MCF 10A (cell line): ENCODE measurements at regions of chr7 and their contacts with region 1.

Region 1: GRCh38 chr7:157336383-157337315 is at the start of gene DNAJB6:
- DNase-seq: peak; percentile 90
- H3K4me3 Mint-ChIP-seq: peak within 1 kb of the TSS; percentile 79
- H3K27ac Mint-ChIP-seq: peak within 1 kb of the TSS; percentile 97
- H3K4me1 Mint-ChIP-seq: peaks cover 13% of the 10 kb centered on the region
- H3K27me3 Mint-ChIP-seq: no peaks in the 10 kb centered on the region
- CTCF ChIP-seq: no peak
- total RNA-seq, gene DNAJB6: 110 and 124 TPM in 2 replicates

Region 2: DNA sequence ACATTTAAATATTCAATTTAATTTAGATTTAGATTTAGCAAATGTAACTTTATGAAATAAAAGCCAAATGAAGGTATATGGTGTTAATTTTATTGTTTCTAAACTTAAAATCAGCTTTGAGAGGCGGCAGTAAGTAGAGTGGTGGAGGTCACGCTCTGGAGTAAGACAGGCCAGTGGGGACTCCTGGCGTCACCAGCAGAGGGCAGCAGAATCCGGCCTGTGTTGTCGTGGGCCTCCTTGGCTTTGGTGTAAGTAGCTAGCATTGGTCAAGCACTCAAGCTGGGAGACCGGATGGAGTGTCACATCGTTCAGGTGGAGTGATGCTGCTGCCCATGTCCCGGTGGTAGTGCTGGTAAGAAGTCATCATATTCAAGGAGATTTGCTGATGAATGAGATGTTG is 98.6 kb before region 1 on chr7:
- CTCF ChIA-PET with region 1: interaction called, 9 read pairs
- POLR2A ChIA-PET with region 1: no interaction called
- intact Hi-C with region 1: loop called (anchors 2 kb)
- DNase-seq: peak; percentile 50
- H3K4me3 Mint-ChIP-seq: no peak overlapping the region
- H3K27ac Mint-ChIP-seq: no peak overlapping the region
- H3K4me1 Mint-ChIP-seq: peaks cover 18% of the 10 kb centered on the region
- H3K27me3 Mint-ChIP-seq: no peaks in the 10 kb centered on the region
- CTCF ChIP-seq: peak; percentile 65

Region 3: GRCh38 chr7:157282141-157282801 is 54.4 kb before region 1 on chr7:
- CTCF ChIA-PET with region 1: interaction called, 7 read pairs
- POLR2A ChIA-PET with region 1: interaction called, 15 read pairs
- intact Hi-C with region 1: loop called (anchors 2 kb)
- DNase-seq: peak; percentile 71
- H3K4me3 Mint-ChIP-seq: peak overlapping the region; percentile 40
- H3K27ac Mint-ChIP-seq: peak overlapping the region; percentile 81
- H3K4me1 Mint-ChIP-seq: peaks cover 12% of the 10 kb centered on the region
- H3K27me3 Mint-ChIP-seq: no peaks in the 10 kb centered on the region
- CTCF ChIP-seq: no peak

Region 4: DNA sequence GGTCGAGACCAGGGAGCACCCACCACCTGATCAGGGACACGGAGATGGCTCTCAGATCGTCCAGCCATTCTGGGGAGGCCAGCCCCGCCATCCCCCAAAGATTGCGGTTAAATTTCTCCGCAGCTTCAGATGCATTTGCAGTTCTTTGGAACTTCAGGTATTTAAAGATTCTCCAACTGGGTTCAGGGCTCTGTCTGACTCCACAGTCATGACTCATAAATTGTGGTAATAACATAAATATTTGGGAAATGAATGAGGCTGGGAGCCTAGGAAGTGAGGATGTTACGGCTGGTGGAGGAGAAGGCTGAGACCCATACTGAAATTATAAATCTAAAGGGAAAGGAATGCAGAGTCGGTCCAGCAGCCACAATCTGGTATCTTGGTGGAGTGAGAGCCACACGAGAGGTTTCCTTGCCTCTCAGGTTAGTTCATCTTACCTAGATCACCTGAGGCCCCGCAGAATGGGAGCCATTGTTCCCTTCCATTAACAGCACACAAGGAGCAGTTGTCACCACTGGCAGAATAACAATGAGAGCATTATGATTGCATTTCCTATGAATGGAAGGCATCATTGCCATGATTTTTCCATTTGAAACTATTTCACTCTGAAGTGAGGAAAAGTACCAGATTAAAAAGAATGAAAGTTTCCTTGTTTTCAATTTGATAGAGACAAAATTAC is 26.5 kb before region 1 on chr7:
- CTCF ChIA-PET with region 1: interaction called, 4 read pairs
- POLR2A ChIA-PET with region 1: interaction called, 11 read pairs
- intact Hi-C with region 1: loop called (anchors 1 kb)
- DNase-seq: peak; percentile 83
- H3K4me3 Mint-ChIP-seq: peak overlapping the region; percentile 33
- H3K27ac Mint-ChIP-seq: peak overlapping the region; percentile 92
- H3K4me1 Mint-ChIP-seq: peaks cover 22% of the 10 kb centered on the region
- H3K27me3 Mint-ChIP-seq: no peaks in the 10 kb centered on the region
- CTCF ChIP-seq: no peak

Region 5: GRCh38 chr7:157347217-157347904 is 10.7 kb after region 1 on chr7:
- CTCF ChIA-PET with region 1: interaction called, 8 read pairs
- POLR2A ChIA-PET with region 1: interaction called, 13 read pairs
- intact Hi-C with region 1: no loop called
- DNase-seq: peak; percentile 92
- H3K4me3 Mint-ChIP-seq: peak overlapping the region; percentile 63
- H3K27ac Mint-ChIP-seq: no peak overlapping the region
- H3K4me1 Mint-ChIP-seq: peaks cover 34% of the 10 kb centered on the region
- H3K27me3 Mint-ChIP-seq: no peaks in the 10 kb centered on the region
- CTCF ChIP-seq: no peak